CD4-positive, alpha-beta memory T cell (primary cell): ENCODE measurements at regions of chr4 and their contacts with region 1.

Region 1: DNA sequence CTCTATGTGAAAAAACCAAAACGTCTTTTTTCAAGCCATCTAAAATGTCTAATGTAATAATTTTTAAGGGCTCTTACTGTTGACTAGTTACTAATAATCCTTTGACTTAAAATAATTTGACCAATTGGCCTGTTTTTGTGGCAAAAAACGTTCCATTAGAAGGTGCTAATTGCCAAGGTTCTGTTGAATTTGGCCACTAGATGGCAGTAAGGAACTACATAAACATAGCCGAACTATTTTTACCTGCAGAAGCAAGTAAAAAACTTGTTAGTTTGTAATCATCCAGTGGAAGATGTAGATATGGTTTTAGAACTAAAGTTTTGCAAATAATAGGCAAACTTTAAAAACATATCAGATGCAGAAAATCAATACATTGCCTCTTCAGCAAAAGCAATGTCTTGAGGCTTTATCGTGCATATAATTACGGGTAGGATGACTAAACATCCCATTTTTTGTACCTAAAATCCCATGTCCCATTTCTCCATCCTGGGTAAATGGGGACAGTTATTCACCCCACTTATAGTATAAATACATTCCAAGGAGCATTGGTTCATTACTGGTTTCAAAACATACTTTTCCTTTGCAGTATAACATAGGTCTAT is 57.6 kb downstream of the PROM1 start:
- DNase-seq: peak in 4 of 5 donors; percentile 48 to 57 (median 53)
- H3K4me3 ChIP-seq: no peak overlapping the region
- H3K4me3 Mint-ChIP-seq: no peak overlapping the region
- H3K27ac ChIP-seq: no peak overlapping the region
- H3K27ac Mint-ChIP-seq: no peak overlapping the region
- H3K4me1 ChIP-seq: no peaks in the 10 kb centered on the region
- H3K4me1 Mint-ChIP-seq: no peaks in the 10 kb centered on the region
- H3K27me3 ChIP-seq: no peaks in the 10 kb centered on the region
- H3K27me3 Mint-ChIP-seq: peaks cover 12 to 14% of the 10 kb centered on the region in 2 donors

Region 2: GRCh38 chr4:16104520-16104919 is 78.3 kb after region 1 on chr4:
- CTCF ChIA-PET with region 1: no interaction called
- POLR2A ChIA-PET with region 1: no interaction called
- intact Hi-C with region 1: no loop called
- DNase-seq: no peak
- H3K4me3 ChIP-seq: no peak overlapping the region
- H3K4me3 Mint-ChIP-seq: no peak overlapping the region
- H3K27ac ChIP-seq: no peak overlapping the region
- H3K27ac Mint-ChIP-seq: no peak overlapping the region
- H3K4me1 ChIP-seq: no peaks in the 10 kb centered on the region
- H3K4me1 Mint-ChIP-seq: peaks cover 0 to 1% (median 0%) of the 10 kb centered on the region in 4 donors
- H3K27me3 ChIP-seq: no peaks in the 10 kb centered on the region
- H3K27me3 Mint-ChIP-seq: peaks cover 2 to 4% of the 10 kb centered on the region in 2 donors

Region 3: DNA sequence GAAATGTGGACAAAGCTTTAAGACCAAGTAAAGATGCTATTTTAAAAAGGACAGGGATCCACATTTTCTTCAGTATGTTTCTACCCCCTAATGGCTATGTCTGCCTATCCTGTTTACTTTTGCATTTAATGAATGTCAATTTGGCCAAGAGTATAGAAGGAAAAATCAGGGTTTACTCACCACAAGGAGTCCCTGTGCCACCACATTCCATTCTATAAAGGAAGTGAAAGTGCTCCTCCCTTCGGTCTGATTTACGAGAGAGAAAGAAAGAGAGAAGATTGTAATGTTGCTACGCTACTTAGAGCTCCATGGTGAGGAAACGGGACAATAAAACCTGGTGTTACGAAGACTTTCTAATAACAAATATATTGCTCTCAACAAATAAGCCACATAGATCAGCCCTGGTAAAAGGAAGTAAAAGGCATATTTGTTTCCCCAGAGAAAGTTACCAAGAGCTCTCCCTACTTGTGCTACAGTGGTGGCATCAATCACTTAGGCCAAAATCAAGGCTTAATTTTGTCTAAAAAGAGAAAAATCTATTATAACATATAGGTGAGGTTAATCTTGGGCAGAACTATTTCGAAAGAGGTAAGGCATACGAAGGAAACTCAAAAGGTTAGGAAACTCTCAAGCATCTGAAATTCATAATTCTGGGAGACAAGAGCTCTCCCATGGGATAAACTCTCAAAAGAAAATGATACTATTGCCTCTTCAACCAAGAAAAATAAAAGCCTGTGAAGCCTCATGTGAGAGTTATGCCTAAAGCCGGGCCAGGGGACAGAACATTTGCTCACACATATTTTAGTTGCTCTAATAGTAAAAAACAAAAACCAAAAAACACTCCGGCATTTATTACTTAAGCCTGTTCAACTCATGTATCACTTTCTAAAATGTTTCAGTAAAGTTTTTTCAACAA is 170.5 kb after region 1 on chr4:
- CTCF ChIA-PET with region 1: no interaction called
- POLR2A ChIA-PET with region 1: no interaction called
- intact Hi-C with region 1: loop called (anchors 5 kb)
- DNase-seq: peak in 1 of 5 donors; percentile 9
- H3K4me3 ChIP-seq: no peak overlapping the region
- H3K4me3 Mint-ChIP-seq: peak overlapping the region in 1 of 8 donors; percentile 0
- H3K27ac ChIP-seq: no peak overlapping the region
- H3K27ac Mint-ChIP-seq: peak overlapping the region in 3 of 7 donors; percentile 4 to 51 (median 25)
- H3K4me1 ChIP-seq: no peaks in the 10 kb centered on the region
- H3K4me1 Mint-ChIP-seq: peaks cover 8 to 17% (median 14%) of the 10 kb centered on the region in 4 donors
- H3K27me3 ChIP-seq: no peaks in the 10 kb centered on the region
- H3K27me3 Mint-ChIP-seq: no peaks in the 10 kb centered on the region

Region 4: DNA sequence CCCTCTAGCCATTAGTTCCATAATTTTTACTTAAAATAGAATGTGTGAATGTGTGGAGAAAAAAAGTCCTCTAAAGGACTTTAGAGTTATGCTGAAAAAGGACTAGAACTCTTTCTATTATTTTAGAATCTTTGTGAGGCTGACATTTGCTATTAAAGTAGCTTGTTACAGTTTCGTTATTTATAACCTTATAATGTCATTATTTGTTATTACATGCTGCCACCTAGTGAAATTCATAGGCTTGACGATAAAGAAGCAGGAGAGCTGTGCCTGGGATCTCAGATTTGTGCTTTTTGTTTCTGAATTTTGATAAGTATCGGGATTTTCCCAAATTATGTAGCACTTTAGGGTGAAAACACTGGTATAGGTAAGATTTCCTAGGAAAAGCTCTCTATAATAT is 238.5 kb after region 1 on chr4:
- CTCF ChIA-PET with region 1: interaction called, 63 read pairs
- POLR2A ChIA-PET with region 1: no interaction called
- intact Hi-C with region 1: loop called (anchors 1 kb)
- DNase-seq: peak in 4 of 5 donors; percentile 35 to 47 (median 39)
- H3K4me3 ChIP-seq: no peak overlapping the region
- H3K4me3 Mint-ChIP-seq: no peak overlapping the region
- H3K27ac ChIP-seq: no peak overlapping the region
- H3K27ac Mint-ChIP-seq: no peak overlapping the region
- H3K4me1 ChIP-seq: peaks cover 6% of the 10 kb centered on the region
- H3K4me1 Mint-ChIP-seq: peaks cover 7 to 10% (median 9%) of the 10 kb centered on the region in 4 donors
- H3K27me3 ChIP-seq: no peaks in the 10 kb centered on the region
- H3K27me3 Mint-ChIP-seq: no peaks in the 10 kb centered on the region

Region 5: DNA sequence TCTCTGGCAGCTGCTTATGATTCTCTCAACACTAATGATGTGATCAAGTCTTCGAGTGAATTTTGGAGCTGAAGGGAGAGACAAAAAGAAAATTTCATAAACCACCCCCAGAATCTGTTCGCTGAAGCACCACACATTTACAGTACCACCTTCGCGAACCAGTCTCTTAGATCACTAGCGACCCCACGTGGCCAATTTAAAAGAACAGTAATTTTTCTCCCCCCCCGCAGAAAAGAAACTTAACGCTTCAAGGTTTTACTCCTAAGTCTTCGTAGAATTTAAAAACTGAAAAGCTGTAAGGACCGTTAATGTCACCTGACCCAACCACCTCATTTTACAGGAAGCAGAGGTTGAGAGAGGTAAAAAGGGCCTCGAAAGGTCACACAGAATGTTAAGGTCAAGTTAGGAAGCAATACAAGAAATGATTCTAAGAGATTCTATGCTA is 1298.1 kb after region 1 on chr4:
- CTCF ChIA-PET with region 1: interaction called, 3 read pairs
- POLR2A ChIA-PET with region 1: no interaction called
- intact Hi-C with region 1: loop called (anchors 10 kb)
- DNase-seq: peak; percentile 25 to 50 (median 34)
- H3K4me3 ChIP-seq: no peak overlapping the region
- H3K4me3 Mint-ChIP-seq: peak overlapping the region in 6 of 8 donors; percentile 2 to 64 (median 50)
- H3K27ac ChIP-seq: no peak overlapping the region
- H3K27ac Mint-ChIP-seq: peak overlapping the region in 5 of 7 donors; percentile 5 to 62 (median 20)
- H3K4me1 ChIP-seq: peaks cover 9% of the 10 kb centered on the region
- H3K4me1 Mint-ChIP-seq: peaks cover 9 to 10% (median 10%) of the 10 kb centered on the region in 4 donors
- H3K27me3 ChIP-seq: no peaks in the 10 kb centered on the region
- H3K27me3 Mint-ChIP-seq: peaks cover 0 to 5% of the 10 kb centered on the region in 2 donors